Activated CD4-positive, alpha-beta memory T cell treated with anti-CD3 and anti-CD28 coated beads for 36 hours (primary cell): ENCODE measurements at regions of chr7 and their contacts with region 1.

Region 1: DNA sequence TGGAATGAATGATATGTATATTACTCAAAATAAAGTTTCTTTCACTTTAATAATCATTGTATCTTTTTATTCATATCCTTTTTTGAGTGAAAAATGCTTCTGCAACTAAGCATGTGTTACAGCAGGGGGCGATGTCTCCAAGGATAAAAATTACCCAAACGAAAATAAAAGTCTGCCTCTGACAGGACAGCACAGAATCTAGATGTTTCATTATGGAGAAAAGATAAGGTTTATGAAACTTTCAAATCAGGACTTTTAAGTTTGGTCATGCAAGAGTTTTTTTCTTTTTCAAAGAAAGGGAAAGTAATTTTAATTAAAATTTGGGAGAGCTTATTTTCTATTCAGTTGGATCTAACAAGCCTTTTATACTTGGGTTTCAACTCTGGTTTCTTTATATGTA is 48.4 kb downstream of the TES start:
- DNase-seq: no peak
- H3K4me3 Mint-ChIP-seq: no peak overlapping the region
- H3K27ac Mint-ChIP-seq: no peak overlapping the region
- H3K4me1 Mint-ChIP-seq: peaks cover 12% of the 10 kb centered on the region
- H3K27me3 Mint-ChIP-seq: no peaks in the 10 kb centered on the region

Region 2: GRCh38 chr7:116340943-116341907 is 82.5 kb after region 1 on chr7:
- CTCF ChIA-PET with region 1: interaction called, 3 read pairs
- POLR2A ChIA-PET with region 1: no interaction called
- intact Hi-C with region 1: loop called (anchors 2 kb)
- DNase-seq: no peak
- H3K4me3 Mint-ChIP-seq: no peak overlapping the region
- H3K27ac Mint-ChIP-seq: no peak overlapping the region
- H3K4me1 Mint-ChIP-seq: peaks cover 4% of the 10 kb centered on the region
- H3K27me3 Mint-ChIP-seq: peaks cover 10% of the 10 kb centered on the region

Region 3: DNA sequence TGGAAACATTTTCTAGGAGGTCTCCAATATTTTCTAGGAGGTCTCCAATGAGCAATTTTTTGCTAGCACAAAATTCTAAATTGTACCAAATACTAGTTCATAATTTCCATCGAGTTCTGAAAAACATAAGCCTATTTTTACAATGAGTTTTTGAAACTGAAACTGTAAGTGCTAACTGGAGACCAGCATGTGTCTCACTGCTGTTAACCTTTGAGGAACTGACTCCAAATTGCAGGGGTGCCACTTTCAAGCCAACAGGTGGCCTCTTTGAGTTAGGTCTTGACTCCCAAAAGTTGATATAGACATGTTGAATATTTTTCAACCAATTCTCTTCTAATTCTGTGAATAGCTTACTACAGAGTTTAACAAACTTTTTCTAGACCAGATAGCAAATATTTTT is 324.9 kb after region 1 on chr7:
- CTCF ChIA-PET with region 1: interaction called, 59 read pairs
- POLR2A ChIA-PET with region 1: no interaction called
- intact Hi-C with region 1: loop called (anchors 1 kb)
- DNase-seq: peak; percentile 39
- H3K4me3 Mint-ChIP-seq: no peak overlapping the region
- H3K27ac Mint-ChIP-seq: no peak overlapping the region
- H3K4me1 Mint-ChIP-seq: peaks cover 17% of the 10 kb centered on the region
- H3K27me3 Mint-ChIP-seq: peaks cover 2% of the 10 kb centered on the region

Region 4: GRCh38 chr7:116786791-116787443 is 528.2 kb after region 1 on chr7:
- CTCF ChIA-PET with region 1: interaction called, 3 read pairs
- POLR2A ChIA-PET with region 1: no interaction called
- intact Hi-C with region 1: loop called (anchors 5 kb)
- DNase-seq: peak; percentile 40
- H3K4me3 Mint-ChIP-seq: no peak overlapping the region
- H3K27ac Mint-ChIP-seq: no peak overlapping the region
- H3K4me1 Mint-ChIP-seq: no peaks in the 10 kb centered on the region
- H3K27me3 Mint-ChIP-seq: no peaks in the 10 kb centered on the region

Region 5: DNA sequence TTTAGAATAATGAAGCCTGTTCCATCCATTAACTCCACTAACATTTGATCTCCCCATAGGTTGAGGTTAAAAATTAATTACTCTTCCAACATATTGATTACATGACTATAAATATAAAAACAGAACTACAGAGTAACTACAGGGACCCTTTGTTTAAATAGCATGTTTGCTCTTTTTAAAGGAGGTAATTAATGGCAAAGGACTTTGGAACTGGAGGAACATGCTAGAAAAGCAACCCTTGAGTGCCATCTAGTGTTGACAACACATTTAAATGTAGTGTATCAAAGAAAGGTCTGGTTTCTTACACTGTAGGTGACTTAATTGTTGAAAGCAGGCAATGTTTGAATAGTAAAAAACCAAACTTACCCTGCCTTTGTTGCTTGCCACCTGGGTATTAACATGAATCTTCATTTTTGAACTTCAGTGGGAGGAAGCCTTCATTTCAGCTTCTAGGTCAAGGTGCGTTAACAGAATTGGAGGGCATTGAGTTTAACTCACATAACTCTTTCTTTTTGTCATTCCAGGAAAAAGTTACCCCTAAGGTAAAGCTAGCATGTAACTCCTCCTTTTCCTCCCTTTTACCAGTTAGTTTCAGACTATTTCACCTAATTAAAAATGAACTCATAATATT is 551.0 kb after region 1 on chr7:
- CTCF ChIA-PET with region 1: interaction called, 5 read pairs
- POLR2A ChIA-PET with region 1: no interaction called
- intact Hi-C with region 1: loop called (anchors 2 kb)
- DNase-seq: no peak
- H3K4me3 Mint-ChIP-seq: no peak overlapping the region
- H3K27ac Mint-ChIP-seq: no peak overlapping the region
- H3K4me1 Mint-ChIP-seq: no peaks in the 10 kb centered on the region
- H3K27me3 Mint-ChIP-seq: no peaks in the 10 kb centered on the region